Activated CD8-positive, alpha-beta T cell treated with anti-CD3 and anti-CD28 coated beads for 36 hours (primary cell): ENCODE measurements at regions of chr2 and their contacts with region 1.

Region 1: DNA sequence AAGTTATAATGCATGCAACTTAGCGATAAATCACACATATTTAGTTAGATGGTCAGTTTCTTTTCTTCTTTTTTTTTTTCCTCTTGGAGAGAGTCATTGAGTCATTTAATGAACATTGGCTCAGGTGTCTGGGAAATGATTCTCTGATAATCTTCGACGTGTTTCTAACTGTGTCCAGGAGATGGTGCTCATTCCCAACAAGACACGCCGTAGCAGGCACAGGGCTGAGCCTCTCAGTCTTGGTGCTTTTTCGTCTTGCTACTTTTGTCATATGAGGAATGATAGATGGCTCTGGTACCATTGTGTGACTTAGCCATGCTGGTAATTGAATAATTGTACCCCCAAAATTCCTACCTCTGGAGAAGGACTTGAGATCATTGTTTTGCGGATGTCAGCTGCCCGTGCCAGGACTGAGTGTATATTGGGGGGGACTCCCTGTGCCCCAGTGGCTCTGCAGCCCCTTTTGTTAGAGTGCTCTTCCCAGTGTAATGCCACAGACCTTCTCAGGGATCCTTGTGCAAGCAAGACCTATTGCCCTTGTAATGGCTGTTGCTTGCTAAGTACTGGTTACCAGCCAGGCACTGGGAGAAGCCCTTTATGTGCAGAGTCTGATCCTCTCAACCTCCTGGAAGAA is 107.6 kb upstream of the CYRIA start:
- DNase-seq: peak; percentile 35
- ATAC-seq: peak; percentile 49
- H3K4me3 Mint-ChIP-seq: no peak overlapping the region
- H3K27ac Mint-ChIP-seq: no peak overlapping the region
- H3K4me1 Mint-ChIP-seq: no peaks in the 10 kb centered on the region
- H3K27me3 Mint-ChIP-seq: peaks cover 13% of the 10 kb centered on the region
- CTCF ChIP-seq: peak; percentile 49

Region 2: GRCh38 chr2:17156086-17156485 is 382.9 kb after region 1 on chr2:
- CTCF ChIA-PET with region 1: no interaction called
- POLR2A ChIA-PET with region 1: no interaction called
- intact Hi-C with region 1: loop called (anchors 5 kb)
- DNase-seq: no peak
- ATAC-seq: no peak
- H3K4me3 Mint-ChIP-seq: no peak overlapping the region
- H3K27ac Mint-ChIP-seq: no peak overlapping the region
- H3K4me1 Mint-ChIP-seq: no peaks in the 10 kb centered on the region
- H3K27me3 Mint-ChIP-seq: no peaks in the 10 kb centered on the region
- CTCF ChIP-seq: no peak